ENCODE measurements at regions of chr5 and their contacts with region 1.

Region 1: DNA sequence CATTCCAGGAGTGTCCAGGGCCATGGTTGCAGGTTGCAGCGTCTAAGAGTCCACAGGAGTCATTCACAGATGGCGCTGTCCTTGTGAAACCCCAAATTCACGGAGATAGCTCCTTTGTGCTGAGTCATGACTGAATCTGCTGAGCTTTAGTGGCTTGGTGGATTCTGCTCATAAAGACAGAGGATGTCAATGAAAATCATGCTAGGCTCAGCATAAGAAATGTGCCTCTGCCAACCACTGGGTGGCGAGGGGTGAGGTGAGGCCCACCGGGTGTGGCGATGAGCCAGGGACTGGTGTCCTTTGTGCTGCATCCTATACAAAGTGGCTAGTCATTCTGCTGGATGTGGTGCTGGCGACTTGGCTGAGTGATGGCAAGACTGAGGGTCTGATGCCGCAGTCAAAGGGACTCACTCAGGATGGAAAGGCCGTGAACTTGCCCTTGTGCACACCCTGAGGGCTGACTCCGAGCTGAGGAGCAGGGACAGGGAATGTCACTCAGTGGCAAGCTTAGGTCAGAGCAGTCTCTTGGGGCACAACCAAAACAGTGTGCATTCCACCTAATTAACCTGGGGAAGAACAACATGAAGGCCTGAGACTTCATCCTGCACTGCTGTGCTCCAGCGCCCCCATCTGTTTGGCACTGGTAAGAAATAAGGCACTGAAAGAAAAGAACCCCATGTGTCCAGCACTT is 71.5 kb downstream of the DAP start:
- DNase-seq: peak; percentile 20
- H3K4me3 Mint-ChIP-seq: no peak overlapping the region
- H3K27ac Mint-ChIP-seq: no peak overlapping the region
- H3K4me1 Mint-ChIP-seq: peaks cover 2% of the 10 kb centered on the region
- H3K27me3 Mint-ChIP-seq: no peaks in the 10 kb centered on the region

Region 2: DNA sequence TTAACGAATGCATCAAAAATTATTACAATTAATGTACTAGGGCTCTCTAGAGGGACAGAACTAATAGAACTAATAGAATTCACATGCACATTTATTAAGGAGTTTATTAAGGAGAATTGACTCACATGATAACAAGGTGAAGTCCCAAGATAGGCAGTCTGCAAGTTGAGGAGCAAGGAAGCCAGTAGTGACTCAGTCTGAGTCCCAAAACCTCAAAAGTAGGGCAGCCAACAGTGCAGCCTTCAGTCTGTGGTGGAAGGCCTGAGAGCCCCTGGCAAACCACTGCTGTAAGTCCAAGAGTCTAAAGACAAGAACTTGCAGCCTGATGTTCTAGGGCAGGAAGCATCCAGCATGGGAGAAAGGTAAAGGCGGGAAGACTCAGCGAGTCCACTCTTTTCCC is 1777.4 kb before region 1 on chr5:
- CTCF ChIA-PET with region 1: no interaction called
- POLR2A ChIA-PET with region 1: no interaction called
- DNase-seq: no peak
- H3K4me3 Mint-ChIP-seq: no peak overlapping the region
- H3K27ac Mint-ChIP-seq: no peak overlapping the region
- H3K4me1 Mint-ChIP-seq: no peaks in the 10 kb centered on the region
- H3K27me3 Mint-ChIP-seq: no peaks in the 10 kb centered on the region

Region 3: GRCh38 chr5:10445352-10445751 is 244.2 kb before region 1 on chr5:
- CTCF ChIA-PET with region 1: interaction called, 10 read pairs
- POLR2A ChIA-PET with region 1: no interaction called
- DNase-seq: peak; percentile 46
- H3K4me3 Mint-ChIP-seq: peak overlapping the region; percentile 43
- H3K27ac Mint-ChIP-seq: peak overlapping the region; percentile 71
- H3K4me1 Mint-ChIP-seq: peaks cover 48% of the 10 kb centered on the region
- H3K27me3 Mint-ChIP-seq: peaks cover 10% of the 10 kb centered on the region

Region 4: GRCh38 chr5:10452768-10453331 is 236.7 kb before region 1 on chr5:
- CTCF ChIA-PET with region 1: interaction called, 16 read pairs
- POLR2A ChIA-PET with region 1: no interaction called
- DNase-seq: peak; percentile 50
- H3K4me3 Mint-ChIP-seq: no peak overlapping the region
- H3K27ac Mint-ChIP-seq: no peak overlapping the region
- H3K4me1 Mint-ChIP-seq: peaks cover 6% of the 10 kb centered on the region
- H3K27me3 Mint-ChIP-seq: no peaks in the 10 kb centered on the region

Region 5: DNA sequence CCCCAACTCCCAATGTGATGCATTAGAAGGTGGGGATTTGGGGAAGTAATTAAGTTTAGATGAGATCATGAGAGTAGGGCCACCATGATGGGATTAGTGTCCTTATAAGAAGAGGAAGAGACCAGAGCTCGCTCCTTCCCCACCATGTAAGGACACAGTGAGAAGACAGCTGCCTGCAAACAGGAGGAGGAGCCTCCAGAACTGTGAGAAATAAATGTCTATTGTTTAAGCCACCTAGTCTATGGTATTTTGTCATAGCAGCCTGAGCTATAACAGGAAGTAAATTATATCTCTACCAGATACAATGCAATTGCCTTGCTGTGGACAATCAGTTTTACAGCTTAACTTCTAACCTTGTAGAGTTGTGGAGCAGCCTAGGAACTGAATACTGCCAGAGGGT is 67.7 kb before region 1 on chr5:
- CTCF ChIA-PET with region 1: no interaction called
- POLR2A ChIA-PET with region 1: no interaction called
- DNase-seq: no peak
- H3K4me3 Mint-ChIP-seq: no peak overlapping the region
- H3K27ac Mint-ChIP-seq: peak overlapping the region; percentile 21
- H3K4me1 Mint-ChIP-seq: peaks cover 6% of the 10 kb centered on the region
- H3K27me3 Mint-ChIP-seq: no peaks in the 10 kb centered on the region

Region 6: GRCh38 chr5:10660720-10661387 is 28.7 kb before region 1 on chr5:
- CTCF ChIA-PET with region 1: no interaction called
- POLR2A ChIA-PET with region 1: no interaction called
- DNase-seq: no peak
- H3K4me3 Mint-ChIP-seq: no peak overlapping the region
- H3K27ac Mint-ChIP-seq: no peak overlapping the region
- H3K4me1 Mint-ChIP-seq: no peaks in the 10 kb centered on the region
- H3K27me3 Mint-ChIP-seq: no peaks in the 10 kb centered on the region

Region 7: GRCh38 chr5:10671041-10672008 is 18.2 kb before region 1 on chr5:
- CTCF ChIA-PET with region 1: no interaction called
- POLR2A ChIA-PET with region 1: interaction called, 10 read pairs
- DNase-seq: no peak
- H3K4me3 Mint-ChIP-seq: no peak overlapping the region
- H3K27ac Mint-ChIP-seq: no peak overlapping the region
- H3K4me1 Mint-ChIP-seq: no peaks in the 10 kb centered on the region
- H3K27me3 Mint-ChIP-seq: peaks cover 3% of the 10 kb centered on the region

Measured in activated CD4-positive, alpha-beta T cell treated with anti-CD3 and anti-CD28 coated beads, Interleukin-2, amount 10 ng/mL, durations not matched to agents 7 days and 5 days (primary cell).